GM13976 (cell line): ENCODE measurements at regions of chr6 and their contacts with region 1.

Region 1: GRCh38 chr6:29834564-29835436 is 7.2 kb downstream of the HLA-G start:
- DNase-seq: no peak
- CTCF ChIP-seq: peak; percentile 71

Region 2: GRCh38 chr6:29419516-29419915 is 415.3 kb before region 1 on chr6:
- in situ Hi-C with region 1: no loop called
- DNase-seq: no peak
- CTCF ChIP-seq: no peak

Region 3: GRCh38 chr6:29509239-29509638 is 325.6 kb before region 1 on chr6:
- in situ Hi-C with region 1: no loop called
- DNase-seq: peak; percentile 67
- CTCF ChIP-seq: no peak

Region 4: GRCh38 chr6:29705389-29706231 is 129.2 kb before region 1 on chr6:
- in situ Hi-C with region 1: loop called (anchors 10 kb)
- DNase-seq: no peak
- CTCF ChIP-seq: peak; percentile 54

Region 5: GRCh38 chr6:29964887-29965562 is 130.2 kb after region 1 on chr6:
- in situ Hi-C with region 1: no loop called
- DNase-seq: peak; percentile 70
- CTCF ChIP-seq: no peak

Region 6: GRCh38 chr6:30212865-30213666 is 378.3 kb after region 1 on chr6 and contains the start of gene TRIM26:
- in situ Hi-C with region 1: no loop called
- DNase-seq: peak; percentile 99
- CTCF ChIP-seq: no peak